Mammary epithelial cell (primary cell): ENCODE measurements at regions of chr1 and their contacts with region 1.

Region 1: DNA sequence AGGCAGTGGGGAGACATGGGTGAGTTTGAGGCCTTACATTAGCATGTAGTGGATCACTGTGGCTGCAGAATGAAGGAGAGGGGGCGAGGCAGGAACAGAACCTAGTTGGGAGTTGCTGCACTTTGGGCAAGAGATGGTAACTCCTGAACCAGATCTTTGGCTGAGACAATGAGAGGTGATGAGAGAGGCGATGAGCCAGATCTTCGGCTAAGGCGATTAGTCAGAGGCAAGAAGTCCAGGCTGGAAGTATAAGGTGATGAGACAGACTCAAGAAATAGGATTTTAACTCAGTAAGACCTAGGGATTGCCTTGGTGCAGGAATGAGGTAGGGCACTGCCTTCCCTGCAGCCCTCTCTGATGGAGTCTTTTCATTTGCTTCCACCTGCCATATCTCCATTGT is 9.1 kb upstream of the ARTN start:
- DNase-seq: peak; percentile 64
- H3K4me3 ChIP-seq: no peak overlapping the region
- H3K27ac ChIP-seq: no peak overlapping the region
- H3K4me1 ChIP-seq: peaks cover 36% of the 10 kb centered on the region
- H3K27me3 ChIP-seq: no peaks in the 10 kb centered on the region
- CTCF ChIP-seq: no peak

Region 2: DNA sequence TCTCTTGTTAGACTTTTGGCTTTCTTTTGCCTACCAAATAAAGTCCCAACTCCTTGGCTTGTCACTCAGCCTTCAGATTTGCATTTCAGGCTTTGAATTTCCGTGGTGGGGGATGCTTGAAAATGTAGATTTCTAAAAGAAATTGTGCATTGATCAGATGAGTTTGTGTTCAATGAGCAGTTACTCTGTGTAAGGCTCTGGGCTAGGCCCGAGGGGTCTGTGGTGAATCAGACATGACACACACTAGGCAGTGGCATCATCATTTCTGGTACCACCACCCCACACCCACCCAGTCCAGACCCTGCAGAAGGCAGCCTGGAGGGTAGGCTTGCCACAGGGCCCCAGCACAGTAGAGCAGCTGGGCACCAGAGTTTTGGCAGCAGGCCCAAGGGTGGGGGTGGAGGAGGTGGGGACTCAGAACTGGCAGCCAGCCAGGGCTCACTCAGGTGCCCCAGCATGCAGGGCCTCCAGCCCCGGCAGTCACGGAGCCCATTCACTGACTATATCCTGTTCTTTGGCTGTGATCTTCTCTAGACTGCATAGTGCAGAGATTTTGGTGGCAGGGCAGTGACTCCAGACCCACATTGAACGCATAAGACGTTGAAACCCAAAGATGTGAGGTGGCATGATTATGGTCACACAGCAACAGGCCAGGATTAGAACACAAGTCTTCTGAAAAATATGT is 88.1 kb before region 1 on chr1:
- CTCF ChIA-PET with region 1: no interaction called
- dilution Hi-C with region 1: loop called (anchors 5 kb)
- in situ Hi-C with region 1: no loop called
- intact Hi-C with region 1: no loop called
- DNase-seq: peak; percentile 84
- H3K4me3 ChIP-seq: no peak overlapping the region
- H3K27ac ChIP-seq: peak overlapping the region; percentile 56
- H3K4me1 ChIP-seq: peaks cover 69% of the 10 kb centered on the region
- H3K27me3 ChIP-seq: no peaks in the 10 kb centered on the region
- CTCF ChIP-seq: no peak

Region 3: DNA sequence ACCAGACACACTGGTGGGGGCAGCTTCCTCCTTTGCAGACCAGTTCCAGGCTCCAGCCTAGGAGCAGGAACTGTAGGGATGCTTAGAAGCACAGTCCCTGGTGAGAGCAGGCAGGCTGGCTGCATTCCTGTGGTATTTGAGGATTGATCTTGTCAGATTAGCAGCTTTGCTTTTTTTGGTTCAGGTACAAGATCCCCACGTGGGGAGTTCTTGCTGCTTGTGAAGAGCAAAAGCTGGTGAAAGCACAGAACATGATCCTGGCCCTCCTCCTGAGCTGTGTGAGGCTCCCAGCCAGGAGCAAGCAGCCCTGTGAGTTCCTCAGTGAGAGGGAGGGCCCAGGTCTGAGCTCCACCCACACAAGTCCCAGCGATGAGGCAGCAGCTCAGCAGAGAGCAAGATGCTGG is 66.2 kb before region 1 on chr1:
- CTCF ChIA-PET with region 1: no interaction called
- dilution Hi-C with region 1: loop called (anchors 5 kb)
- in situ Hi-C with region 1: no loop called
- intact Hi-C with region 1: no loop called
- DNase-seq: peak; percentile 99
- H3K4me3 ChIP-seq: no peak overlapping the region
- H3K27ac ChIP-seq: peak overlapping the region; percentile 20
- H3K4me1 ChIP-seq: peaks cover 41% of the 10 kb centered on the region
- H3K27me3 ChIP-seq: no peaks in the 10 kb centered on the region
- CTCF ChIP-seq: no peak

Region 4: DNA sequence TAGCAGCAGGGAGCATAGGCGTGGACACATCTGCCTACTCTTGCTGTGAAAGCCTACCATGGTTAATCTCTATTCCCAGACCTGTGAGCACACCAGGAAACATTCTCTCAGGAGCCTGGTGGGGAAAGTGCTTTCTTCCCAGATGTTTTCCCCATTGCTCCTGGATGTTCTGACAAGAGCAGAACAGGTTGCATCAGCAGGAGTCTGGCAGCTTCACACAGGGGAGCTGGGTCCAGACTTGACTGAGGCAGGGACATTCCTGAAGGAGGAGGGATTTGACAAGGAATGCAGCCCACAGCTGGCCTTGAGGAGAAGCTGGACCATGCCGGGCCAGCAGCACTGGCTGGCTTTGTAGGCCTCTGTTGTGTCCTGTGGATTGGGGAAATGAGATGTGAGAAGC is 11.9 kb before region 1 on chr1:
- CTCF ChIA-PET with region 1: interaction called, 5 read pairs
- dilution Hi-C with region 1: no loop called
- in situ Hi-C with region 1: no loop called
- intact Hi-C with region 1: loop called (anchors 1 kb)
- DNase-seq: peak; percentile 83
- H3K4me3 ChIP-seq: peak overlapping the region in 1 of 3 experiments; percentile 9
- H3K27ac ChIP-seq: peak overlapping the region; percentile 75
- H3K4me1 ChIP-seq: peaks cover 41% of the 10 kb centered on the region
- H3K27me3 ChIP-seq: no peaks in the 10 kb centered on the region
- CTCF ChIP-seq: no peak

Region 5: DNA sequence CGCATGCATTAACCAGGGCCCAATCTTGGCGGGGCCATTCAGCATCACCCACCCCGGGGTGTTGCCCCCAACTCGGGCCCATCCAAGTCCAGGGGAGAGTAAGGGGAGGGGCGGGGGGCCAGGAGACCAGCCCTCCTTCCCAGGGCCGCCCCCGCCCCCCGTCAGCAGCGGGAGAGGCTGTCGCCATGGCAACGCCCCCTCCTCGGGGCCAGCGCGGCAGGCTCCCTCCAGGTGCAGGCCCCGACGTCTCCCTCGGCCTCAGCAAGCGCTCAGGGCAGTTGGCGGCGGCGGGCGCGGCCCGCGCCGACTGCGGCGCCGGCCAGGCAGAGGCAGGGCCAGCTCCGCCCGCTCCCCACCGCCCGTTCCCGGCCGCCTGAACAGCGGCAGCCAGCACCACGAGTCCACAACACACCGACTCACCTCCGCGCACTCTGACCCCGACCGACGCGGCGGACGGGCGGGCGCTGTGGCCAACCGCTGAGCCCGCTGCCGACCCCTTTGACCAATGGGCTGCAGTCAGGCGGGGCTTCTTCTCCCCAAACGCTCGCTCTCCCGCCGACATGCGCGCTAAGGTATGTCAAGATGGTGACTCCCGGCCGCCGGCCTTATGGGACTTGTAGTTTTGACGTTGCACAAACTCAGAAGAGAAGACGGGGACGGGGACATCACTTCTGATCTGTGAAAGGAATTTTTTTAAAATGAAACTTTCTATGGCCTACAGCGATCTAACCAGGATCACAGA is 430.5 kb after region 1 on chr1 and contains the start of gene ERI3:
- CTCF ChIA-PET with region 1: no interaction called
- dilution Hi-C with region 1: no loop called
- in situ Hi-C with region 1: no loop called
- intact Hi-C with region 1: no loop called
- DNase-seq: peak; percentile 98
- H3K4me3 ChIP-seq: peak within 1 kb of the TSS; percentile 78 to 98 (median 90)
- H3K27ac ChIP-seq: peak within 1 kb of the TSS; percentile 77
- H3K4me1 ChIP-seq: peaks cover 6% of the 10 kb centered on the region
- H3K27me3 ChIP-seq: no peaks in the 10 kb centered on the region
- CTCF ChIP-seq: no peak
- total RNA-seq, gene ERI3: 58.4 to 59.3 TPM